SK-N-SH (cell line): ENCODE measurements at regions of chr11 and their contacts with region 1.

Region 1: GRCh38 chr11:73661035-73661628 is 14.8 kb downstream of the PLEKHB1 start:
- DNase-seq: peak; percentile 97
- H3K4me3 ChIP-seq: peak overlapping the region; percentile 35 to 51; a peak in 3 of 4 replicates
- H3K27ac ChIP-seq: no peak overlapping the region
- H3K4me1 ChIP-seq: peaks cover 0 to 6% of the 10 kb centered on the region in 2 experiments; a peak in 1 of 4 replicates
- H3K27me3 ChIP-seq: no peaks in the 10 kb centered on the region
- CTCF ChIP-seq: peak; percentile 94
- EP300 ChIP-seq: no peak
- RAD21 ChIP-seq: peak; percentile 99

Region 2: GRCh38 chr11:73350908-73351636 is 310.1 kb before region 1 on chr11:
- CTCF ChIA-PET with region 1: interaction called, 67 read pairs
- POLR2A ChIA-PET with region 1: no interaction called
- DNase-seq: peak; percentile 90
- H3K4me3 ChIP-seq: no peak overlapping the region; a peak in 1 of 4 replicates
- H3K27ac ChIP-seq: no peak overlapping the region
- H3K4me1 ChIP-seq: no peaks in the 10 kb centered on the region; a peak in 1 of 4 replicates
- H3K27me3 ChIP-seq: no peaks in the 10 kb centered on the region
- CTCF ChIP-seq: peak; percentile 99
- EP300 ChIP-seq: no peak
- RAD21 ChIP-seq: peak; percentile 79

Region 3: DNA sequence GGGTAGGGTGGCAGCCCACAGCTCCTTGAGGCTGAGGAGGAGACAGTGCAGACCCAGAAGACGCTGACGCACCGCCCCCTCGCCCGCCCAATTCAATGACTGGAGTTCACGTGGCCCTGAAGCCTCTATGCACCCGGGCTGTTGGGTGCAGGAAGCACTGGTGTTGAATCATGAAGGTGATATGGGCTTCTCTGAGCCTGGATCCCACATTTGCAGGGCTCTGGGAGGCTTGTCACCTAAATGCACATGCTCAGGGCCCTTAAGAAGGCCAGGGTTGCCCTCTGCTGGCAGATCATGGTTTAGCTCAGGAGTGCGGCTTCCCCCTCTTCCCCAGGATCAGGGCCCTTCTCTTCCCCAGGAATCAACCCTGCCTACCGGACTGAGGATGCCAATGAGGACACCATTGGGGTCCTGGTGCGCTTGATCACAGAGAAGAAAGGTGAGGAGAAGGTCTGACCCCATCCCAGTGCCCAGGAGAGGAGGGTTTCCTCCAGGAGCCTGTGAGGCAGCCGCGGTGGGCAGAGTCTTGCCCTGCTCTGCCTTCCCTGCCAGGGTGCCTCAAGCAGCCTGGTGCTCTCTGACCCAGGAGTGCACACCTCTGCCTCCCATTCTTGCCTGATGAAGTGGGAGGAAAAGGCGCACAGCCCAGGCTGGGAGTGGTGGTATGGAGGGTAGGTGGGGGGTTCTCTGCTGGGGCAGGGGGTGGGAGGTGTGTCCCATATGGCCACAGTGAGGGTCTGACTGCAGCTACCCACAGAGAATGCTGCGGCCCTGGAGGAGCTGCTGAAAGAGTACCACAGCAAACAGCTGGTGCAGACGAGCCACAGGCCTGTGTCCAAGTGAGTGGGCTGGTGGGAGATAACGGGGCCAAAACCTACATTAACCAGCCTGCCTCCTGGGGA is 267.4 kb before region 1 on chr11:
- CTCF ChIA-PET with region 1: interaction called, 122 read pairs
- POLR2A ChIA-PET with region 1: no interaction called
- DNase-seq: peak; percentile 94
- H3K4me3 ChIP-seq: no peak overlapping the region; a peak in 1 of 4 replicates
- H3K27ac ChIP-seq: no peak overlapping the region
- H3K4me1 ChIP-seq: no peaks in the 10 kb centered on the region; a peak in 1 of 4 replicates
- H3K27me3 ChIP-seq: no peaks in the 10 kb centered on the region
- CTCF ChIP-seq: peak; percentile 81
- EP300 ChIP-seq: no peak
- RAD21 ChIP-seq: peak; percentile 92

Region 4: GRCh38 chr11:73439002-73439843 is 221.9 kb before region 1 on chr11:
- CTCF ChIA-PET with region 1: interaction called, 11 read pairs
- POLR2A ChIA-PET with region 1: no interaction called
- DNase-seq: peak; percentile 61
- H3K4me3 ChIP-seq: no peak overlapping the region
- H3K27ac ChIP-seq: peak overlapping the region; percentile 38 to 90; a peak in 3 of 4 replicates
- H3K4me1 ChIP-seq: peaks cover 0 to 19% of the 10 kb centered on the region in 2 experiments; a peak in 3 of 4 replicates
- H3K27me3 ChIP-seq: no peaks in the 10 kb centered on the region
- CTCF ChIP-seq: no peak
- EP300 ChIP-seq: peak in 1 of 2 experiments; percentile 73; a peak in 2 of 4 replicates
- RAD21 ChIP-seq: 0 out of 2 replicates have a peak, but pooled peaks have one; percentile 9

Region 5: GRCh38 chr11:73625696-73626318 is 35.3 kb before region 1 on chr11:
- CTCF ChIA-PET with region 1: interaction called, 123 read pairs
- POLR2A ChIA-PET with region 1: no interaction called
- DNase-seq: peak; percentile 81
- H3K4me3 ChIP-seq: peak overlapping the region in 1 of 2 experiments; percentile 45; a peak in 1 of 4 replicates
- H3K27ac ChIP-seq: no peak overlapping the region
- H3K4me1 ChIP-seq: no peaks in the 10 kb centered on the region
- H3K27me3 ChIP-seq: no peaks in the 10 kb centered on the region; the same call in 1 of the 2 replicates
- CTCF ChIP-seq: peak; percentile 92
- EP300 ChIP-seq: no peak
- RAD21 ChIP-seq: peak; percentile 81

Region 6: DNA sequence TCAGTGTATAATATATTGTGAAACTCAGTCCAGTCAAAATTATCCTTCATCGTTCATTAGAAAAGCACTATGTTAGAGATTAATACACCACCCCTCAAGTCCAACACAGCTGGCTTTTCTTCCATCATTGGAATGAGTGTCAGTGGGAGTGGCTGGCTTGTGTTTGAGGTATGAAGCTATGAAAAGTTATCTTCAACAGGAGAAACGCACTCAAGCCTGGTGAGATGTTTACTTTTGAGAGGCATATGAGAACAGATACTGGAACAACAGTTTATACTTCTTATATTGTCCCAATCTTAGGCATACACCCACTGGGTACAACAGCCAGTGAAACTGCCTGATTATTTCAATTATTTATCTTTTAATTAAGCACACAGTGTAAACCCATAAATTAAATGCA is 19.6 kb after region 1 on chr11:
- CTCF ChIA-PET with region 1: interaction called, 22 read pairs
- POLR2A ChIA-PET with region 1: no interaction called
- DNase-seq: no peak
- H3K4me3 ChIP-seq: no peak overlapping the region
- H3K27ac ChIP-seq: no peak overlapping the region
- H3K4me1 ChIP-seq: no peaks in the 10 kb centered on the region
- H3K27me3 ChIP-seq: no peaks in the 10 kb centered on the region
- CTCF ChIP-seq: no peak
- EP300 ChIP-seq: no peak
- RAD21 ChIP-seq: no peak

Region 7: GRCh38 chr11:73716101-73717056 is 55.2 kb after region 1 on chr11:
- CTCF ChIA-PET with region 1: no interaction called
- POLR2A ChIA-PET with region 1: no interaction called
- DNase-seq: peak; percentile 21
- H3K4me3 ChIP-seq: no peak overlapping the region
- H3K27ac ChIP-seq: peak overlapping the region; percentile 13 to 47; a peak in 3 of 4 replicates
- H3K4me1 ChIP-seq: peaks cover 5 to 23% of the 10 kb centered on the region in 2 experiments; a peak in 3 of 4 replicates
- H3K27me3 ChIP-seq: no peaks in the 10 kb centered on the region
- CTCF ChIP-seq: no peak
- EP300 ChIP-seq: no peak
- RAD21 ChIP-seq: no peak